Activated CD4-positive, alpha-beta T cell treated with anti-CD3 and anti-CD28 coated beads, Interleukin-2, amount 10 ng/mL, durations not matched to agents 24 days and 14 days (primary cell): ENCODE measurements at regions of chr21 and their contacts with region 1.

Region 1: GRCh38 chr21:33205476-33205875 is 24.3 kb upstream of the IFNAR2 start:
- DNase-seq: peak; percentile 73
- H3K4me3 Mint-ChIP-seq: peak overlapping the region; percentile 70
- H3K27ac Mint-ChIP-seq: peak overlapping the region; percentile 91
- H3K4me1 Mint-ChIP-seq: peaks cover 26% of the 10 kb centered on the region
- H3K27me3 Mint-ChIP-seq: peaks cover 2% of the 10 kb centered on the region

Region 2: GRCh38 chr21:33229784-33230544 is 24.5 kb after region 1 on chr21 and contains the start of gene IFNAR2:
- intact Hi-C with region 1: loop called (anchors 1 kb)
- DNase-seq: peak; percentile 93
- H3K4me3 Mint-ChIP-seq: peak within 1 kb of the TSS; percentile 84
- H3K27ac Mint-ChIP-seq: peak within 1 kb of the TSS; percentile 89
- H3K4me1 Mint-ChIP-seq: peaks cover 43% of the 10 kb centered on the region
- H3K27me3 Mint-ChIP-seq: peaks cover 2% of the 10 kb centered on the region
- total RNA-seq, gene IFNAR2: 35.2 and 36.7 TPM in 2 replicates

Region 3: DNA sequence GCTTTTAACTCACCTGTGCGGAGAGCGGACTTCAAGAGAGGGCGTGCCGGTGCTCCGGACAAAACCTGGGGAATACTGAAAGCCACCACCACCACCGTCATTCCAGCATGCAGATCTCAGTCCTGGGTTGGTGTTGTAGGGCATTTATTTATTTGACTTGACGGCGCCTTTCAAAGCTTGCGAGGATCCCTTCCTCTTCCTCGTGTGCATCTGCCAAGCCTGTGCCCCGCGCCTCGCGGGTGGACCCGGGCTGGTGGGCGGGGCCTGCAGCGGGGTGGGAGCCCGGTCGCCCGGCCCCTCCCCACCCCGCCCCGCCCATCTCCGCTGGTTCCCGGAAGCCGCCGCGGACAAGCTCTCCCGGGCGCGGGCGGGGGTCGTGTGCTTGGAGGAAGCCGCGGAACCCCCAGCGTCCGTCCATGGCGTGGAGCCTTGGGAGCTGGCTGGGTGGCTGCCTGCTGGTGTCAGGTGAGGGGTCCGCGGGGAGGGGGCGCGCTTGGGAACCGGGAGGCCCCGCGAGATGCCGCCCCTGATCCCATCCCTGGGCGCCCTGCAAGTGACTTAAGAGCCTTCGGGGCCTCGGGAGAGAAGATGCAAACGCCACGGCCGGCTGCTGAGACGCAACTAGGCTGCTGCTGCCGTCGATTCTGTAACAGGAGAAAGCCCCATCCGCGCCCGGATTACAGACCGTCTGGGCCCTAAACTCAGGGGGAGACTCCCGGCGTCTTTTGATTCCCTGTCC is 60.7 kb after region 1 on chr21 and contains the start of gene IL10RB:
- intact Hi-C with region 1: loop called (anchors 2 kb)
- DNase-seq: peak; percentile 93
- H3K4me3 Mint-ChIP-seq: peak within 1 kb of the TSS; percentile 99
- H3K27ac Mint-ChIP-seq: peak within 1 kb of the TSS; percentile 93
- H3K4me1 Mint-ChIP-seq: peaks cover 37% of the 10 kb centered on the region
- H3K27me3 Mint-ChIP-seq: no peaks in the 10 kb centered on the region
- total RNA-seq, gene IL10RB: 21.1 and 24.0 TPM in 2 replicates